GM10248 (cell line): ENCODE measurements at regions of chr16 and their contacts with region 1.

Region 1: GRCh38 chr16:71564155-71564967 is 12.5 kb downstream of the TAT start:
- DNase-seq: no peak
- CTCF ChIP-seq: no peak

Region 2: DNA sequence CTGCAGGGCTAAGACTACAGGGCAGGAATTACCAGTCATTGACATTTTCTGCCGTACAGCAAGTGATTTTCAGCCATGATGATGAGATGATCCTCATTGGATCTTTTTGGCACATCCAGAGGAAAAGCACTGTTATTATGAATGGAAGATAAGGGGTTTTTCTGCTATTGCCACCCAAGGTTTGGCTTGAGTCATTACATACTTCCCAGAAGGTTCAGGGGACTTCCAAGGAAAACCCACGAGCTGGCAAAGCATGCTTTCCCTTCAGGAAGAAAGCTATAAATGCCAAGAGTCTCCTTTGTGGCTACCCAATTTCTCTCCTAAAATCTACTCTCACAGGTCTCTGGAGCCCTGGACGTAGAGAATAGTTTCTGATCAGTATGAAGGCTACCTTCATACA is 32.0 kb before region 1 on chr16:
- CTCF ChIA-PET with region 1: interaction called, 10 read pairs
- POLR2A ChIA-PET with region 1: no interaction called
- DNase-seq: no peak
- CTCF ChIP-seq: no peak

Region 3: DNA sequence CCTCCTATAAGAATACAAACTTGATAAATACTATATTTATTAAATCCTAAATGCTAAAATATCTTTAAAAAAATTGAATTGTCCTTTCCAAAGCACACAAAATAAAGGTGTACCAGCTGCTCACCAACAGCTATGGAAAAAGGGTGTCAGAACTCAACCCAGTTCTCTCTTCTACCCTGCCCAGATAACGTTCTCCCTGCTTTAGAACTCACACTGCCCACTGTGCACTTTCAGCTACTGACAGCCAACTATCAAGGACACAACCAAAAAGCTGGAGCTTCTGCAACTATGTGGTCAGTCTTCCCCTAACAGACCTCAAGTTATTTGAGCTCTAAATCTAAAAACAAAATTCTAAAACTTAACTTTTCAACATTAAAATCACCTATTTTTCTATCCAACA is 230.6 kb after region 1 on chr16:
- CTCF ChIA-PET with region 1: no interaction called
- POLR2A ChIA-PET with region 1: no interaction called
- DNase-seq: no peak
- CTCF ChIP-seq: no peak

Region 4: GRCh38 chr16:71826533-71827017 is 262.2 kb after region 1 on chr16:
- CTCF ChIA-PET with region 1: no interaction called
- POLR2A ChIA-PET with region 1: no interaction called
- DNase-seq: no peak
- CTCF ChIP-seq: no peak